ENCODE measurements at regions of chr21 and their contacts with region 1.

Region 1: DNA sequence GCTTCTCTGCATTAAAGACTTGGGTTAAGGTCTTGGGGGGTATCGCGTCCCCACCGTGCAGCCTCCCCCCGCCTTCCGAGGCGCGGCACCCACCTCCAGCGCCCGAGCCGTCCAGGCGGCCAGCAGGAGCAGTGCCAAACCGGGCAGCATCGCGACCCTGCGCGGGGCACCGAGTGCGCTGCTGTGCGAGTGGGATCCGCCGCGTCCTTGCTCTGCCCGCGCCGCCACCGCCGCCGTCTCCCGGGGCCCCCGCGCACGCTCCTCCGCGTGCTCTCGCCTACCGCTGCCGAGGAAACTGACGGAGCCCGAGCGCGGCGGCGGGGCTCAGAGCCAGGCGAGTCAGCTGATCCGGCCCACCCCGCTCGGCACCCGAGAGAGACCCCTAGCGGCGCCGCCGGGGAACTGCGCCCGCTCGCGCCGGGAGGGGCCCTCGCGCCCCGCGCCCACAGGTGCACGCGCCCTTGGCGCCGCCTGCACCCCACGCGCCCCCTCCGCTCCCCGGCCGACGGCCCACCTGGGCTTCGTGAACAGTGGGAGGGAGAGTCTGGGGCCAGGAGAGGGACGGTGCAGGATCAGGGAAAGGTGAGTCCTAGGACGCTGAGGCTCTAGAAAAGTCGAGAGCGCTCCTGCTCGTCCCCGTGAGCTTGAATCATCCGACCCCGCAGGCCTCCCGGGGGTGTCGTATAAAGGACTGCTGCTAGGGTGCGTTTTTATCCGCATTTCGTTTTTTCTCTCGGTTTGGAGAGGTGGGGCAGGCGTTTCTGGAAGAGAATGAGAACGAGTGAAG is at the start of gene APP:
- DNase-seq: peak; percentile 94
- H3K4me3 ChIP-seq: peak within 1 kb of the TSS; percentile 76 to 96 (median 90)
- H3K27ac ChIP-seq: peak within 1 kb of the TSS; percentile 87 to 92 (median 88)
- H3K4me1 ChIP-seq: peaks cover 30 to 43% (median 42%) of the 10 kb centered on the region in 4 donors
- H3K27me3 ChIP-seq: no peaks in the 10 kb centered on the region
- CTCF ChIP-seq: peak in 2 of 3 experiments; percentile 98 to 100
- EP300 ChIP-seq: no peak
- POLR2A ChIP-seq: peak; percentile 40
- total RNA-seq, gene APP: 459 to 790 (median 624) TPM

Region 2: DNA sequence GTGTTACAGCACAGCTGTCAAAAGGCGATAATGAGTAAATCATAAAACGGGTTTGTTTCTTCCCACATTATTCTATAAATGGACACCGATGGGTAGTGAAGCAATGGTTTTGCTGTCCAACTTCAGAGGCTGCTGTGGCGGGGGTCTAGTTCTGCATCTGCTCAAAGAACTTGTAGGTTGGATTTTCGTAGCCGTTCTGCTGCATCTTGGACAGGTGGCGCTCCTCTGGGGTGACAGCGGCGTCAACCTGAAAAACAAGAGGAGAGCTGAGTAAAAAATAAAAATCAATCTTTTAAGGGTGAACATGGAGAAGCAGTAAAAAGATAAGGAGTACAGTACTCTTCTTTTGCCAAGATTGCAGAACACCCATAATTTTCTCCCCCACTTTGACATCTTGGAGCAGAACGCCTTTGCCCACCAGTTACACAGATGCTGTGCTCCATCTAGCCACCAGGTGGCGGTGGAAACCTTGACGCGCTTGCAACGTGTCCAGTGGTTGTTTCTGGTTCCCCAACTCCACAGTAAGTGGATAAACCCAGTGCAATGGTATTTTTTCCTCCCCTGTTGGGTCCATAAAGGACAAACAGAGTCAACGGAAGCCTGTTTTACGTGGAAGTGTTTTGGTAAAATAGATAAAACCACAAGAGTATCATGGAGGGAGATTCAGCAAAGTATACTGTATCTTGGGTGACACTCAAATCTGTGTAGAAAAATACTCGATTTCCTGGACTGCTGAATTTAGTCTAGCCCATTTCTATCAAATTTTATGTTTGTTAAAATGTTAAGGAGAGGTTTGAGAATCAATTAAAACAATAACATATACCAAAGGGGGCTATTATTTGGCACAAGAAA is 288.9 kb before region 1 on chr21:
- intact Hi-C with region 1: loop called (anchors 1 kb)
- DNase-seq: no peak
- H3K4me3 ChIP-seq: no peak overlapping the region
- H3K27ac ChIP-seq: no peak overlapping the region
- H3K4me1 ChIP-seq: peaks cover 0 to 12% (median 6%) of the 10 kb centered on the region in 4 donors
- H3K27me3 ChIP-seq: no peaks in the 10 kb centered on the region
- CTCF ChIP-seq: peak; percentile 81 to 96 (median 94)
- EP300 ChIP-seq: no peak
- POLR2A ChIP-seq: no peak

Region 3: GRCh38 chr21:25895565-25896205 is 275.0 kb before region 1 on chr21:
- intact Hi-C with region 1: loop called (anchors 5 kb)
- DNase-seq: no peak
- H3K4me3 ChIP-seq: no peak overlapping the region
- H3K27ac ChIP-seq: no peak overlapping the region
- H3K4me1 ChIP-seq: peaks cover 0 to 15% (median 3%) of the 10 kb centered on the region in 4 donors
- H3K27me3 ChIP-seq: no peaks in the 10 kb centered on the region
- CTCF ChIP-seq: peak; percentile 46 to 61 (median 54)
- EP300 ChIP-seq: no peak
- POLR2A ChIP-seq: no peak

Region 4: DNA sequence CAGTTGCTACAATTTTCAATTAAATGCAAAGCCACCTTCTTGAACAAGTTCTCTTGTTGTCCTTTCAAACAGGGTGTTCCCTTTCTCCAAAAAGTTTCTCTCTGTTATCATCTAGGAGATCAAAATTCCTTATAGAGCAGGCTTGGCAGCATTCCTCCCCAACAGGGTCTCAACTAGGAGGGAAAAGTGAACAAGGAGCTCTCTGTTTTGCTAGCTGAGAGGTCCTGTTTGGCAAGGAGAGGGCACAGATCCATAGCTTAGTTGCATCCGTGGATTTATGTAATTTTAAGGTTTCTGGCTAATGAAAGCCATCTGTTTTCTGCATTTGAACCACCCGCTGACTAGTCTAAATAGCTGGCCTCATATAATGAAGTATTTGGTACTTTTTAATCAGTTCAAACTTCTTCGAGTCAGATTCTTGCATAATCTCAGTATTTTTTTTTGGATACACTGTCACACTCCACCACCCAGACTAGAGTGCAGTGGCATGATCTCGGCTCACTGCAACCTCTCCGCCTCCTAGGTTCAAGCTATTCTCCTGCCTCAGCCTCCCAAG is 54.1 kb before region 1 on chr21:
- intact Hi-C with region 1: loop called (anchors 10 kb)
- DNase-seq: no peak
- H3K4me3 ChIP-seq: no peak overlapping the region
- H3K27ac ChIP-seq: peak overlapping the region; percentile 41 to 71 (median 57)
- H3K4me1 ChIP-seq: peaks cover 34 to 70% (median 61%) of the 10 kb centered on the region in 4 donors
- H3K27me3 ChIP-seq: no peaks in the 10 kb centered on the region
- CTCF ChIP-seq: no peak
- EP300 ChIP-seq: no peak
- POLR2A ChIP-seq: no peak

Region 5: GRCh38 chr21:26130249-26130881 is 40.3 kb before region 1 on chr21:
- intact Hi-C with region 1: loop called (anchors 5 kb)
- DNase-seq: no peak
- H3K4me3 ChIP-seq: no peak overlapping the region
- H3K27ac ChIP-seq: peak overlapping the region; percentile 27 to 59 (median 38)
- H3K4me1 ChIP-seq: peaks cover 31 to 60% (median 56%) of the 10 kb centered on the region in 4 donors
- H3K27me3 ChIP-seq: no peaks in the 10 kb centered on the region
- CTCF ChIP-seq: no peak
- EP300 ChIP-seq: no peak
- POLR2A ChIP-seq: no peak